ENCODE measurements at regions of chr2 and their contacts with region 1.

Region 1: GRCh38 chr2:241372361-241372992 is 16.4 kb downstream of the FARP2 start:
- DNase-seq: no peak
- H3K4me3 ChIP-seq: no peak overlapping the region
- H3K27ac ChIP-seq: no peak overlapping the region
- H3K4me1 ChIP-seq: peaks cover 51% of the 10 kb centered on the region
- H3K27me3 ChIP-seq: no peaks in the 10 kb centered on the region
- CTCF ChIP-seq: no peak

Region 2: GRCh38 chr2:241391892-241392665 is 19.6 kb after region 1 on chr2:
- CTCF ChIA-PET with region 1: interaction called, 3 read pairs
- POLR2A ChIA-PET with region 1: interaction called, 18 read pairs
- intact Hi-C with region 1: no loop called
- DNase-seq: peak; percentile 29 to 47
- H3K4me3 ChIP-seq: no peak overlapping the region
- H3K27ac ChIP-seq: no peak overlapping the region
- H3K4me1 ChIP-seq: no peaks in the 10 kb centered on the region
- H3K27me3 ChIP-seq: no peaks in the 10 kb centered on the region
- CTCF ChIP-seq: peak; percentile 65

Region 3: GRCh38 chr2:241412144-241412543 is 39.7 kb after region 1 on chr2:
- CTCF ChIA-PET with region 1: no interaction called
- POLR2A ChIA-PET with region 1: no interaction called
- intact Hi-C with region 1: no loop called
- DNase-seq: peak in 1 of 2 experiments; percentile 43
- H3K4me3 ChIP-seq: no peak overlapping the region
- H3K27ac ChIP-seq: no peak overlapping the region
- H3K4me1 ChIP-seq: no peaks in the 10 kb centered on the region
- H3K27me3 ChIP-seq: no peaks in the 10 kb centered on the region
- CTCF ChIP-seq: no peak

Measured in PC-9 (cell line).